ENCODE measurements at regions of chr15 and their contacts with region 1.

Region 1: DNA sequence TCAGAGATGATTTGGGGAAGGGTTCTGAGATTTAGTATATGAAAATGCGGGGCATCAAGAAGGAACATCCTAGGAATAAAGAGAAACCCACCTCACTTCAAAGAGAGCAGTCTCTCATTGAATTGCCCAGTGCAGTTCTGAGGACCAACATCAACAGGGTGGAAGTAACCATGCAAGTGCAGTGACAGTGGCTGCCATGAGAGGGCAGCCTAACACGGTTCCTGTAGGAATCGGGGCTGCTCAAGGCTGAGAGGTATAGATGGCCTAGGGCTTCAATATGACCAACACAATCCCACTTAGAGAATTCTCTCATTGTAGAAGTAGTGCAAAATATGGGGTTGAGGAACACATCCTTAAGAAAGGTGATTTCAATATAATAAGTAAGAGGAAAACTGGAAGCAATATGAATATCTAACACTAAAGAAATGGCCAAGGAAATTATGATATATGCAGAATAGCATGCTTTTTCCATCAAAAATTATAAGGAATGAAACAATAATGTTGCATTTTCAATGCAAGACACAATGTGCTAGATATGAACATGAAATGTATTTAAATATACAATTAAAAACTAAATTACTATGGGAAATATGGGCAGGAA is 51.1 kb upstream of the ARRDC4 start:
- DNase-seq: peak; percentile 55 to 80 (median 72)
- ATAC-seq: peak; percentile 73 to 87
- H3K4me3 ChIP-seq: no peak overlapping the region
- H3K27ac ChIP-seq: no peak overlapping the region
- H3K4me1 ChIP-seq: no peaks in the 10 kb centered on the region
- H3K27me3 ChIP-seq: no peaks in the 10 kb centered on the region

Region 2: DNA sequence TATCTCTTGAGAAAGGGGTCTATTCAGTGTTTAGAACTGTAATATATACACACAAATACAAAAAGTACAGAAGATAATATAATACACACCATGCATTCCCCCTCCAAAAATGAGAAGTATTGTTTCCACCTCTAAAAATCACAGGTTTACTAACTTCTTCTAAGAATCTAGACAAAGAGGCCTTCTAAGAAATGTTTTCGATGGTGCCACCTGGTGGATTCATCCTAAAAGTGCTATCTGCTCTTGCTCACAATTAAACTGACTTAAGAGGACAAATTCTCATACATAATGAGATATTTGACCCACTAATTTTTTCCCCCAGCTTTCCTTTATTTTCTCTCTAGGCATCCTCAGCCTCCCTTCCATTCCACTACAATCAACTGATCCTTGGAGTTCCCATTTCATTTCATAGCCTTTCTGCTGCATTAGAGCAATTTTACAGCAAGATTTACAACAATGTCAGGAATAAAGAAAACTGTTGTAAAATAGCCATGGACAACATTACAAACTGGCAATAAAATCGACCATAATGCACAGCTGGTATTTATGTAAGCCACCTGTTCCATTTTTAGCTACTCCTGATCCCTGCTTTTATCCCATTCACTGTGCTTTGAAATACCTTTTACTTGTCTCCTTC is 175.7 kb after region 1 on chr15:
- intact Hi-C with region 1: loop called (anchors 2 to 5 kb)
- DNase-seq: no peak
- ATAC-seq: no peak
- H3K4me3 ChIP-seq: no peak overlapping the region
- H3K27ac ChIP-seq: no peak overlapping the region
- H3K4me1 ChIP-seq: no peaks in the 10 kb centered on the region
- H3K27me3 ChIP-seq: no peaks in the 10 kb centered on the region

Region 3: GRCh38 chr15:98177924-98178592 is 268.7 kb after region 1 on chr15:
- intact Hi-C with region 1: loop called in 3 of 4 experiments (anchors 5 kb)
- DNase-seq: no peak
- ATAC-seq: peak; percentile 73 to 81
- H3K4me3 ChIP-seq: no peak overlapping the region
- H3K27ac ChIP-seq: no peak overlapping the region
- H3K4me1 ChIP-seq: no peaks in the 10 kb centered on the region
- H3K27me3 ChIP-seq: no peaks in the 10 kb centered on the region

Region 4: GRCh38 chr15:98292442-98293240 is 383.2 kb after region 1 on chr15:
- intact Hi-C with region 1: loop called in 2 of 4 experiments (anchors 5 kb)
- DNase-seq: peak in 2 of 3 donors; percentile 37 to 58
- ATAC-seq: peak in 1 of 2 donors; percentile 47
- H3K4me3 ChIP-seq: no peak overlapping the region
- H3K27ac ChIP-seq: no peak overlapping the region
- H3K4me1 ChIP-seq: no peaks in the 10 kb centered on the region
- H3K27me3 ChIP-seq: no peaks in the 10 kb centered on the region

Region 5: GRCh38 chr15:98413933-98414546 is 504.6 kb after region 1 on chr15:
- intact Hi-C with region 1: loop called in 1 of 4 experiments (anchors 10 kb)
- DNase-seq: peak; percentile 63 to 76 (median 74)
- ATAC-seq: peak; percentile 32 to 41
- H3K4me3 ChIP-seq: no peak overlapping the region
- H3K27ac ChIP-seq: no peak overlapping the region
- H3K4me1 ChIP-seq: no peaks in the 10 kb centered on the region
- H3K27me3 ChIP-seq: no peaks in the 10 kb centered on the region

Region 6: GRCh38 chr15:98428253-98428989 is 519.0 kb after region 1 on chr15:
- intact Hi-C with region 1: loop called in 2 of 4 experiments (anchors 10 kb)
- DNase-seq: peak; percentile 70 to 90 (median 89)
- ATAC-seq: peak; percentile 79 to 86
- H3K4me3 ChIP-seq: peak overlapping the region; percentile 51
- H3K27ac ChIP-seq: peak overlapping the region; percentile 37
- H3K4me1 ChIP-seq: no peaks in the 10 kb centered on the region
- H3K27me3 ChIP-seq: no peaks in the 10 kb centered on the region

Measured in right cardiac atrium (tissue), 5 donors.